SK-N-SH (cell line): ENCODE measurements at regions of chr7 and their contacts with region 1.

Region 1: GRCh38 chr7:97104719-97105238 is 12.7 kb upstream of the SDHAF3 start:
- DNase-seq: peak; percentile 87
- H3K4me3 ChIP-seq: no peak overlapping the region
- H3K27ac ChIP-seq: no peak overlapping the region
- H3K4me1 ChIP-seq: no peaks in the 10 kb centered on the region
- H3K27me3 ChIP-seq: 0 out of 2 replicates have a peak, but pooled peaks cover 3% of the 10 kb centered on the region
- CTCF ChIP-seq: peak; percentile 95
- EP300 ChIP-seq: no peak
- RAD21 ChIP-seq: peak; percentile 99

Region 2: GRCh38 chr7:96359876-96360275 is 744.9 kb before region 1 on chr7:
- CTCF ChIA-PET with region 1: no interaction called
- POLR2A ChIA-PET with region 1: no interaction called
- DNase-seq: no peak
- H3K4me3 ChIP-seq: no peak overlapping the region
- H3K27ac ChIP-seq: no peak overlapping the region
- H3K4me1 ChIP-seq: no peaks in the 10 kb centered on the region
- H3K27me3 ChIP-seq: no peaks in the 10 kb centered on the region
- CTCF ChIP-seq: no peak
- EP300 ChIP-seq: no peak
- RAD21 ChIP-seq: no peak

Region 3: GRCh38 chr7:97043281-97043680 is 61.5 kb before region 1 on chr7:
- CTCF ChIA-PET with region 1: no interaction called
- POLR2A ChIA-PET with region 1: no interaction called
- DNase-seq: no peak
- H3K4me3 ChIP-seq: no peak overlapping the region
- H3K27ac ChIP-seq: no peak overlapping the region
- H3K4me1 ChIP-seq: no peaks in the 10 kb centered on the region
- H3K27me3 ChIP-seq: no peaks in the 10 kb centered on the region
- CTCF ChIP-seq: no peak
- EP300 ChIP-seq: no peak
- RAD21 ChIP-seq: no peak

Region 4: DNA sequence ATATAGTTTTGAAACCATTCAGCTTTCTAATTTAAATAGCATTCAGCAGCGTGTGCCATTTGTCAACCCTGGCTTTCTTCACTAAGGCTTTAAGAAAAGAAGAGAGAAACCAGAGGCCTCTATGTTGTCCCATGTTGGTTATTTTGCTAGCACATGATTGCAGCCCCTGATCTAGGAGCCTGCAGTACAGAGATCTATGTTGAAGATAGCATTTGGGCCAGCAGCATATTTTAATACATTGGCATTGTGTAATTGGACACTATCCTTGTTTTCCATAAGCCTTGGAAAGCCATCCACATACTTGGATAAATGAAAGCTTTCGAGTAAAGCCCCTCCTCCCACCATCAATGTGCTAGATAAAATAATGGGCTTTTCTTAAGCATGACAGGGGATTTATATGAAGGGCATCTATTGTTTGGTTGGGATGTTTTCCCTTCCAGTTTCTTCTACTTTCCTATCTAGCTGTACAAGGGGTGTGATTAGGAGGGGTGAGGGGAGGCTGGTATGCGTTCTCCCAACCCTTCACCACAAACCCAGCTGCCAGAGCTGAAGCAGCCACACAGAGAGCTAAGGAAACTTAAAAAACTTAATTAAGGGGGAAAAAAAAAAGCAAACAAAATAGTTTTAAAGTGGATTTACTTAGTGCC is 10.4 kb before region 1 on chr7:
- CTCF ChIA-PET with region 1: interaction called, 60 read pairs
- POLR2A ChIA-PET with region 1: no interaction called
- DNase-seq: no peak
- H3K4me3 ChIP-seq: no peak overlapping the region
- H3K27ac ChIP-seq: no peak overlapping the region
- H3K4me1 ChIP-seq: no peaks in the 10 kb centered on the region
- H3K27me3 ChIP-seq: 0 out of 2 replicates have a peak, but pooled peaks cover 11% of the 10 kb centered on the region
- CTCF ChIP-seq: no peak
- EP300 ChIP-seq: no peak
- RAD21 ChIP-seq: no peak

Region 5: DNA sequence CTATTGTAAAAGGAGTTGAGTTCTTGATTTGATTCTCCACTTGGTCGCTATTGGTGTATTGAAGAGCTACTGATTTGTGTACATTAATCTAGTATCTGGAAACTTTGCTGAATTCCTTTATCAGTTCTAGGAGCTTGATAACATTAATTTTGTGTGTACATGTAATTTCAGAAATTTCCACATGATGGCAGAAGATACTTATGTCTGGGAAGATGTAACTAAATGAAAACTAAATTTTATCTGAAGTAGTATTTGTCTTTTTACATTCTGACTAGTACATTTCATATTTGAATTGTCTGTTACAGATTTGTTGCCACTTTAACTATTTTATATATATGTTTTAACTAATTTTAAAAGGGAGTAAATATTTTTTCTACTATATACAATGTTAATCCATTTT is 40.3 kb after region 1 on chr7:
- CTCF ChIA-PET with region 1: interaction called, 10 read pairs
- POLR2A ChIA-PET with region 1: no interaction called
- DNase-seq: peak; percentile 27
- H3K4me3 ChIP-seq: no peak overlapping the region
- H3K27ac ChIP-seq: no peak overlapping the region
- H3K4me1 ChIP-seq: no peaks in the 10 kb centered on the region
- H3K27me3 ChIP-seq: no peaks in the 10 kb centered on the region
- CTCF ChIP-seq: peak; percentile 84
- EP300 ChIP-seq: no peak
- RAD21 ChIP-seq: peak; percentile 77

Region 6: GRCh38 chr7:97179454-97180104 is 74.8 kb after region 1 on chr7:
- CTCF ChIA-PET with region 1: interaction called, 40 read pairs
- POLR2A ChIA-PET with region 1: no interaction called
- DNase-seq: peak; percentile 84
- H3K4me3 ChIP-seq: no peak overlapping the region; a peak in 1 of 4 replicates
- H3K27ac ChIP-seq: no peak overlapping the region
- H3K4me1 ChIP-seq: peaks cover 0 to 3% of the 10 kb centered on the region in 2 experiments; a peak in 1 of 4 replicates
- H3K27me3 ChIP-seq: no peaks in the 10 kb centered on the region
- CTCF ChIP-seq: peak; percentile 96
- EP300 ChIP-seq: no peak
- RAD21 ChIP-seq: peak; percentile 80

Region 7: DNA sequence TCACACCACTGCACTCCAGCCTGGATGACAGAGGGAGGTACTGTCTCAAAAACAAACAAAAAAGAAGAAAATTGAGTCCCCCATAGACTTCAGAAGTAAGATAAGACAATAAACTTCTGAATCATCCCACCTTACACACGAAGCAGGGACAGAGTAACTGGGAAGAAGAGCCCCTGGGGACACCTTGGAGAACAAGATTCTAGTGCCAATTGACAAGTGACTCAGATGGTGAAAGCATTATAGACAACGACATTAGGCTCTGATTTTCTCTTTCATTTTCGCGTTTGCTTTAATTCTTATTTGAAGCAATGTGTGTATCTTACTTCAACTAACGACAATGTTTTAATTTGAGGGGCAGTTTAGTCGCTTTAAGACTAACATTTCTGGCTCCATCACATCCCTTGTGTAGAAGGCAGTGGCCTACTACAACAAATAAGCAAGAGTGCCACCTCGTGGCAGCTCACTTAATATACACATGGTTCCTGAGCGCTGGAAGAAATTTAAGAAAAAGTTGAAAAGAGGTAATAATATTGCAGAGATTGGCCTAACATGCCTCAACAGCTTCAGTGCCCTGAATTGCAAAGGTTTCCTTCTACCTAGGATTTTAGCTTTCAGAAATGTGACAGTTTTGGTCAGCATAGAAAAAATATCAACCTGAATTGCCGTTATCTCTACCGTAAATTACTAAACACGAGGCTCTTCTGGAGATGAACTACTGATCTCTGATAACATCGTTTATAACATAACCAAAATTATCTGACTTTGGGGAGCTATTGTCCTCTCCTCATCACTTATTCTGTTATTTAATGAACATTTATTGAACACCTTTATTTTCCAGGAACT is 730.7 kb after region 1 on chr7:
- CTCF ChIA-PET with region 1: interaction called, 62 read pairs
- POLR2A ChIA-PET with region 1: no interaction called
- DNase-seq: peak; percentile 61
- H3K4me3 ChIP-seq: peak overlapping the region in 1 of 2 experiments; percentile 2; a peak in 1 of 4 replicates
- H3K27ac ChIP-seq: no peak overlapping the region
- H3K4me1 ChIP-seq: no peaks in the 10 kb centered on the region
- H3K27me3 ChIP-seq: peaks cover 32% of the 10 kb centered on the region
- CTCF ChIP-seq: peak; percentile 95
- EP300 ChIP-seq: no peak
- RAD21 ChIP-seq: peak; percentile 75